Activated naive CD4-positive, alpha-beta T cell treated with anti-CD3 and anti-CD28 coated beads for 36 hours (primary cell): ENCODE measurements at regions of chr3 and their contacts with region 1.

Region 1: DNA sequence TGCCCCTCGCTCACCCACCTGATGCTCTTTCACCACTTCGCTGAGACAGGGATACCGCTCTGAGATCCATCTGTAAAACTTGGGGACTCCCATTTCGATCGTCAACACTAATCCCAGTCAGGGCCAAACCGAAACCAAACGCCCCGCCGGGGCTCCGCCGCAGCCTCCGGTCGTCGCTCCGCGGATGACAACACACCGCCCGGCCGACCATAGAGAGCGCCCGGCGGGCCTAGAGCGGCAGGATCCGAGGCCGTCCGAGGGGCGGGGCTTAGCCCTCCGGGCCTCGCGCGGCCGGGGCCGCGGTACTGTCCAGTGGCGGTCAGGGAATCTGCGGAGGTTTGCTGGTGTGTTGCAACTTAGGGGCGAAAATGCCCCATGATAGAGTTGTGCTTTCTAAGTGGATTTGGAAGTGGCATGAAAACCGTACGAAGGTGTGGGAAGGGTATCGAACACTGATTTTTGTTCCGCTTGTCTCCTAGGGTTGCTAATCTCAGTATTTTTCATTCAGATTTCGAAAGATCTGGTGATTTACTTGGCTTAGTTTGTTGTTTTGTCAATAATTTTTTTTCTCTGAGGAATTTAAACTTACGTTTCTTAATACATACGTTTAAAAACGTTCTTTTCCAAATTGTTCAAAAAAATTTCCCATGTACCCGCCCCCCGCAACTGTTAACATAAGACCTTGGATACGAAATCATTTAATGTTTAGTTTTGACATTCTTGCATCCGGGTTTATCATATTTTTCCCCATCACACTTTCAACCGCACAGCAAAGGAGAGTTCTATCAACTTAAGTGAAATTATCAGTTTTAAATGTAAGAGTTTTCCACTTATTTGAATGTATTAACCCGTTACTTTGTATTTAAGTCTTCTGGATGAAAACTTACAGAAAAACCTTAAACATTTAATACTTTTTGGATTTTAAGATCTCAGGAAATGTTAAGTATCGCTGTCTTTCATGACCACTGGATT is at the start of gene XRN1:
- DNase-seq: peak; percentile 97
- H3K4me3 Mint-ChIP-seq: peak within 1 kb of the TSS; percentile 98
- H3K27ac Mint-ChIP-seq: peak within 1 kb of the TSS; percentile 100
- H3K4me1 Mint-ChIP-seq: peaks cover 27% of the 10 kb centered on the region
- H3K27me3 Mint-ChIP-seq: no peaks in the 10 kb centered on the region
- total RNA-seq, gene XRN1: 63.9 to 64.5 TPM

Region 2: GRCh38 chr3:141553055-141553454 is 895.1 kb before region 1 on chr3:
- CTCF ChIA-PET with region 1: no interaction called
- intact Hi-C with region 1: loop called (anchors 10 kb)
- DNase-seq: peak; percentile 21
- H3K4me3 Mint-ChIP-seq: no peak overlapping the region
- H3K27ac Mint-ChIP-seq: peak overlapping the region; percentile 60
- H3K4me1 Mint-ChIP-seq: peaks cover 55% of the 10 kb centered on the region
- H3K27me3 Mint-ChIP-seq: no peaks in the 10 kb centered on the region

Region 3: GRCh38 chr3:142028243-142028777 is 419.8 kb before region 1 on chr3:
- CTCF ChIA-PET with region 1: no interaction called
- intact Hi-C with region 1: loop called (anchors 5 kb)
- DNase-seq: peak; percentile 62
- H3K4me3 Mint-ChIP-seq: peak overlapping the region; percentile 80
- H3K27ac Mint-ChIP-seq: peak overlapping the region; percentile 73
- H3K4me1 Mint-ChIP-seq: peaks cover 24% of the 10 kb centered on the region
- H3K27me3 Mint-ChIP-seq: no peaks in the 10 kb centered on the region

Region 4: DNA sequence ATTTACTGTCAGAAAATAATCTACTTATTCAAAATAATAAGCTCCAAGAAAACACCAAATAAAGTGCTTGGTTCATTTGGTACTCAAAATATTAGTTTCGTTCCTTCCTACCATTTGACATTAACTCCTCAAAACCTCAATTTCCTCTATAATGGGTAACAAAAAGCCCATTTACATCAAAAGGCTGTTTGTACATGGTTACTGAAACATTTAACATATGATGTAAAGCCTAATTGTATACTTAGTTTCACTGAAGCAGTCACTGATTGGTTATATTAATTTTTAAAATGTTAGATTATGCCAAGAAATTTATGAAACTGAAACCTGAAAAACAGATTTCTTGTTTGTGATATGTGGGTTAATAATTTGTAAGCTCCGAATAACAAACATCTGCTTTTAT is 15.0 kb before region 1 on chr3:
- CTCF ChIA-PET with region 1: no interaction called
- intact Hi-C with region 1: loop called (anchors 2 kb)
- DNase-seq: no peak
- H3K4me3 Mint-ChIP-seq: no peak overlapping the region
- H3K27ac Mint-ChIP-seq: no peak overlapping the region
- H3K4me1 Mint-ChIP-seq: peaks cover 35% of the 10 kb centered on the region
- H3K27me3 Mint-ChIP-seq: no peaks in the 10 kb centered on the region

Region 5: GRCh38 chr3:142563491-142563997 is 115.4 kb after region 1 on chr3:
- CTCF ChIA-PET with region 1: no interaction called
- intact Hi-C with region 1: loop called (anchors 5 kb)
- DNase-seq: no peak
- H3K4me3 Mint-ChIP-seq: no peak overlapping the region
- H3K27ac Mint-ChIP-seq: peak overlapping the region; percentile 88
- H3K4me1 Mint-ChIP-seq: peaks cover 22% of the 10 kb centered on the region
- H3K27me3 Mint-ChIP-seq: no peaks in the 10 kb centered on the region

Region 6: DNA sequence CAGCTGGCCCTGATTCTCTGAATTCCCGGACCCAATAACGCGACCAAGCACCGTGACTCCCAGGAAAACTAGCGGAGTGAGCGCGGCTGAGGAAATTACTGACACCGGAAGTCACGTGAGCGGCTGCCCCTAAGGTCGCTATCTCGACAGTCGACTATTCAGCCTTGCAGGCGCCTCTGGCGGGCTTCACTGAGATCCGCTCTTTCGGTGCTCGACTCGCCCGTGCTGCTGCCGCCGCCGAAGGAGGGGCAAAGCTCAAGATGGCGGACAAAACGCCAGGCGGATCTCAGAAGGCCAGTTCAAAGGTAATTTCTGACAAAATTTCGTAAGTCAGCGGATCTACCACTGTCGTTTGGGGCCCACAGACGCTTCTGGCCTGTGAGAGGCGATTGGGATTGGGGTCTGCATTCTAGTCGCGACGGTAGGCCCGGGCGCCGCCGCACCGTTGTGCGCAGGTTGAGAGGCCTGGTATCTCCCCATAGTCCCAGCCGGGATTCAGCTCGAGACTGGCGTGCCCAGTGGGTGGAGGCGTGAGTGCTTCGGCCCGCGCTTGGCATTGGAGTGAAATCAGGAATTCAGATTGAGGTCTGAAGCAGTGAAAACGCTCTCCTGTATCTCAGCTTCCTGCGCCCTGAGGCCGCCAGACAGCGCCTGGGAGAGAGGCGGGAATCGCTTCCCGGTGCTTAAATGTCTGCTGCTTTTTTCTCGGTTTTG is 553.4 kb after region 1 on chr3 and contains the start of gene U2SURP:
- CTCF ChIA-PET with region 1: no interaction called
- intact Hi-C with region 1: loop called (anchors 1 kb)
- DNase-seq: peak; percentile 95
- H3K4me3 Mint-ChIP-seq: peak within 1 kb of the TSS; percentile 96
- H3K27ac Mint-ChIP-seq: peak within 1 kb of the TSS; percentile 96
- H3K4me1 Mint-ChIP-seq: peaks cover 31% of the 10 kb centered on the region
- H3K27me3 Mint-ChIP-seq: no peaks in the 10 kb centered on the region
- total RNA-seq, gene U2SURP: 173 to 180 TPM